ENCODE measurements at regions of chr10 and their contacts with region 1.

Region 1: DNA sequence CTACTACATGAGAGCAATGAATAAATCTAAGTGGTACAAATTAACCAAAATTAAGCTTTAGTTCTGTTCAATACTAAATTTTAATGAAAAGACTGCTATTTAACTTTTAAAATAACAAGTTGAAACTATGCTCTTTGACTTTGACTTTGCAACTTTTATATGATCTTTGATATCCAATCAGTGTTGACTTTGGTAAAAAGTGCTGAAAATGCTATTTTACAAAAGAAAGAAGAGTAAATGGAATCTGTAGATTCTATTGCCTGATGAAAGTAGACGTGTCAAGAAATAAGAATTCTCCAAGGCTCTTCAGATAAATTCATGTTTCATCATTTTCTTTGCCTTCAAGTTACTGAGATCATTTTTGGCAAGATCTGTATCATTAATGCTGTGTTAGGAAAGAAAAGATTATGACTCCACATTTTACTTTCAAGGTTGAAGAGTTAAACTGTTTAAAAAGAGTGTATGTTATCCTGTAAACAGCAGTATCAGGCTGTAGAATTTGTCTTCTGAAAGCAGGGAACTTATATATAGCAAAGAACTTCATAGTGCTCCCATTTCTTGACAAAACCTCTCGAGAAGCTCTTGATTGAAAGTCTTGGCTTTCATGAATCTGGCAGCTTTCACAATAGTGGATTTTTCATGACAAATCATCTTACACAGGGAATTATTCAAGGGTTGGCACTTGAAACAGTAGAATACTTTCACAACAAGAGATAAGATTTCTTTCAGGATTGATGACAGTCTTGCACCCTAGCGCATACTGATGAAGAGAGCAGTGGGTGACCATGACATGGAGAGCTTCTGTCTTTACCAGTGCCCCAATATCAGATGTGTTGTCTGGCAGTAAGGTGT is 72.1 kb downstream of the PTEN start:
- DNase-seq: no peak
- ATAC-seq: no peak
- H3K4me3 Mint-ChIP-seq: no peak overlapping the region
- H3K27ac Mint-ChIP-seq: peak overlapping the region; percentile 67
- H3K4me1 Mint-ChIP-seq: peaks cover 42% of the 10 kb centered on the region
- H3K27me3 Mint-ChIP-seq: no peaks in the 10 kb centered on the region
- CTCF ChIP-seq: no peak

Region 2: DNA sequence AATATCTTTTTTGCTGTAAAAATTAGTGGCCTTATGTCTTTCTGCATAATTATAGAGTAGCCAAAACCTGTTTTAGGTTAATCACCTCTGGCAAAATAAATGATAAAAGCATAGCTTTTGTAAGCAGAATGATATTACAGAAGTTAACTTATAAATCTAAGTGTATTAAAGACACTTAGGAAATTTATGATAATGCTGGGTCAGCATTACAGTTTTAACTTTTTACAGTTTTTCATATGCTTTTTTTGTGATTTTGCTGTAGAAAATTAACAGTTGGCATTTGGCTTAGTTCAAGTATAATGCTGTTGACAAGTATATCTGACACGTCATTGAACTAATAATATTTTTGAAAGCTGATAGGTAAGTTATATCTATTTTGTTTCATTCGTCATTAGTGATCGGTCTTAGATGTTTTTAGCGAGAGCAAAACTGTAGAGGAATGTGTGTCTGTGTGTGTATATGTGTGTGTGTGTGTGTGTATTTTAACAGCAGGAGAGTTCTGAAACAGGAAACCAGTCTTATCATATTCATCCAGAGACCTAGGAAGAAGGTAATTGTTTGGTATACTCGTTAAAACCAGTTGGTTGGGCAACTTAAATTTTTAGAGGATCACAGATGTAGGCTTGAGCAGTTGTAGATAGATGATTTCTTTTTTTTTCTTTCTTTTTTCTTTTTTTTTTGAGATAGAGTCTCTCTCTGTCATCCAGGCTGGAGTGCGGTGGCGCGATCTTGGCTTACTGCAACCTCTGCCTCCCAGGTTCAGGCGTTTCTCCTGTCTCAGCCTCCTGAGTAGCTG is 56.7 kb before region 1 on chr10:
- CTCF ChIA-PET with region 1: no interaction called
- POLR2A ChIA-PET with region 1: interaction called, 13 read pairs
- DNase-seq: no peak
- ATAC-seq: no peak
- H3K4me3 Mint-ChIP-seq: no peak overlapping the region
- H3K27ac Mint-ChIP-seq: peak overlapping the region; percentile 14
- H3K4me1 Mint-ChIP-seq: peaks cover 20% of the 10 kb centered on the region
- H3K27me3 Mint-ChIP-seq: no peaks in the 10 kb centered on the region; the same call in 1 of the 2 replicates
- CTCF ChIP-seq: no peak